Right ventricle myocardium inferior (tissue), 1 donor: ENCODE measurements at regions of chr17 and their contacts with region 1.

Region 1: GRCh38 chr17:29148790-29149430 is 31.3 kb downstream of the MYO18A start:
- DNase-seq: peak; percentile 96
- ATAC-seq: peak; percentile 97

Region 2: GRCh38 chr17:29179232-29180033 is 30.5 kb after region 1 on chr17:
- intact Hi-C with region 1: loop called (anchors 1 kb)
- DNase-seq: no peak
- ATAC-seq: no peak

Region 3: DNA sequence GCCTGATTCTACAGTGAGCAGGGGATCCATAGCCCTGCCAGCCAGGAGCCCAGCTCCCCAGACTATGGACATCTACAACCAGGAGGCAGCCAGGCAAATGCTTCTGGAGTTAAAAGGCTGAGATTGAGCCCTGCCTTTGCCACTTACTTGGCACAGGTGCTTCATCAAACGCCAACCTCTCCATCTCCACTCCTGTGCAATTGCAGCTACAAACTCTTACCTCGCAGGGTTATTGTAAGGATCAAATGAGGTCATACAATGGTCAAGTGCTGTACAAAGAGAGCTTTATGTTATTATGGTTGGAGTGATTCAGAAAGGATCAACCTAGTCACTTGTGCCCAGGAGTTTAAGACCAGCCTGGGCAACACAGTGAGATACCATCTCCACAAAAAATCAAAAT is 41.1 kb after region 1 on chr17:
- intact Hi-C with region 1: no loop called
- DNase-seq: no peak
- ATAC-seq: no peak

Region 4: GRCh38 chr17:29219378-29220047 is 70.6 kb after region 1 on chr17:
- intact Hi-C with region 1: loop called (anchors 2 kb)
- DNase-seq: no peak
- ATAC-seq: peak; percentile 88

Region 5: DNA sequence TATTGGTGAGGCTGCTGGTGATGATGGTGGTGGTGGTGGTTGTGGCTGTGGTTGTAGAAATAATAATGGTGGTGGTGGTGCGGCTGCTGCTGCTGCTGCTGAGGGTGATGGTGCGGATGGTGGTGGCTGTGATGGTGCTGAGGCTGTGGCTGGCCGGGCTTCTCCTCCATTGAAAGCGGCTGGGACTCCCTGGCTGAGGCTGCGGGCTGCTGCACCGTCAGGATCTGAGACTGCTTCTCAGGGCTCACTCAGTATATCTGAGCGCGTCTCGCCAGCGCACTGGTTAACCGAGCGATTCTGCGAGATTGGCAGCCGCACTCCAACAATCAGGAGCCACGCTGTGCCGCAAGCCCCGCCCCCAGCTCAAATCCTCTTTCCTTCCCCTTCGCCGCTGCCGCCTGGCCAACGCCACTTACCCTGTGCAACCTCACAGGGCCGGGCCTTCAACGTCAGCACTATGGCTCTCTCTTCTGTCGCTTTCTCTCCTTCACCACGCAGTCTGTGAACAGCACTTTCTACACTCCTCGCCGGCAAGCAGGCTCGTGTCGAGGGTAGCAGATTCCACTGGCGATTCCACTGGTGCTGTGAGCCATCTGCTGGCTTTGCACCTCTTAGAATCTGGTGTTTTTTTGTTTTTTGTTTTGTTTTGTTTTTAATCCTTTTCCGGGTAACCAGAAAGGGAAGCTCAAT is 145.1 kb after region 1 on chr17 and contains the start of gene NUFIP2:
- intact Hi-C with region 1: loop called (anchors 1 kb)
- DNase-seq: peak; percentile 100
- ATAC-seq: peak; percentile 97
- total RNA-seq, gene NUFIP2: 42.3 TPM

Region 6: DNA sequence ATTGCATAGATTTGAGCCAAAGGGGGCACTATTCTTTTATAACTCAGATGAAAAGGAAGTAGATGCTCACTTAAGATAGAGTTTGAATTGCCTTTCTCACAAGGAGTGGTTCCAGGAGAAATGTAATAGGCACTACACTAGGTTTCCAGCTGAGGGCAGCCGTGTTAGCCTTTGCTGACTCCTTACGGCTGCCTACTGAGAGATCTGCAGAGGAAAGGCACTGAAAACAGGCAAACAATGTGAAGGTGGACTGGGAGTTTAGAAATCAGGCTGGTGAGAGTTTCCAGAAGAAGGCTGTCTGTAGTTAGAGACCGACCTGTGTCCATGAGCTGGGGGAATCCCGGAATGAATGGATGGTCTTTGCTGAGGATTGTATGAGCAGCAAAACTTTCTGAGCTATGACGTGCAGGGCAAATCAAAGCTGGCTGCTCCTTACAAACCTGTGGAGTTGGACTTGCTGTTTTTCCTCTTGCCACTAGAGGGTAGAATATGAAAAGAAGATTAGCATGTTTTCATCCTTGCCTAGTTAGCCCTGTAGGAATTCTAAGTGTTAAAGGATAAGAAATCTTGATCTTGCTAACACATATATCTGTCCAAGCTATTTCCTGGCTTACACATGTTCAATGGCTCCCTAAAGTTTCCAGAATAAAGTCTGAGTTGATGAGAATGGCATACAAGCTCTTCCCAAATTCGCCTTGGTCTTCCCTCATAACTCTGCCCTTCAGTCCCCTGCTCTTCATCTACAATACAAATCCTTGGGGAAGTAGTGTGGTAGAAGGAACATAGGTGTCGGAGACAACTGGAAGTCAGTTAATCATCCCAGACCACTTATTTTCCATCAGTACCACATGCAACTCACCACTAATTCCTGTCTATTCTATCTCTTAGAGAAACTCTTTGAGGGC is 221.2 kb after region 1 on chr17:
- intact Hi-C with region 1: loop called (anchors 10 kb)
- DNase-seq: no peak
- ATAC-seq: peak; percentile 92